ENCODE measurements at regions of chr5 and their contacts with region 1.

Region 1: GRCh38 chr5:149434162-149435014 is 55.3 kb upstream of the IL17B start:
- DNase-seq: peak in 1 of 2 donors; percentile 69
- ATAC-seq: peak; percentile 36

Region 2: GRCh38 chr5:149371296-149371962 is 63.0 kb before region 1 on chr5:
- intact Hi-C with region 1: loop called in 1 of 2 experiments (anchors 10 kb)
- DNase-seq: peak; percentile 57 to 74
- ATAC-seq: peak; percentile 91

Region 3: DNA sequence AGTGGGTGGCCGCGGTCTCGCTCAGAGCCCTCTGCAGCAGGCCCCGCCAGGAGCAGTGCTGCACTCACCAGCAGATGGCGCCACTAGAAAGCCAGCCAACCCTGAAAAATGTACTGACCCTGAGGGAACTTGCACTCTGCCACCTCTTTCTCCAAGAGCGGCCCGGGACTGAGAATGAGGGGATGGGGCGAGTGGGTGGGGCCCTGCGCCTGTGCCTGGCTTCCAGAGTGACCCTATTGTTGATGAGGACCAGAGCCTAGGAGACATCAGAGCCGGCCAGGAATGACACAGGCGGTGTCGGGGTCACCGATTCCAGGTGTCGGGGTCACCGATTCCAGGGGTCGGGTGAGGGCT is 52.4 kb before region 1 on chr5:
- intact Hi-C with region 1: loop called (anchors 10 kb)
- DNase-seq: peak; percentile 72 to 82
- ATAC-seq: peak; percentile 84

Region 4: DNA sequence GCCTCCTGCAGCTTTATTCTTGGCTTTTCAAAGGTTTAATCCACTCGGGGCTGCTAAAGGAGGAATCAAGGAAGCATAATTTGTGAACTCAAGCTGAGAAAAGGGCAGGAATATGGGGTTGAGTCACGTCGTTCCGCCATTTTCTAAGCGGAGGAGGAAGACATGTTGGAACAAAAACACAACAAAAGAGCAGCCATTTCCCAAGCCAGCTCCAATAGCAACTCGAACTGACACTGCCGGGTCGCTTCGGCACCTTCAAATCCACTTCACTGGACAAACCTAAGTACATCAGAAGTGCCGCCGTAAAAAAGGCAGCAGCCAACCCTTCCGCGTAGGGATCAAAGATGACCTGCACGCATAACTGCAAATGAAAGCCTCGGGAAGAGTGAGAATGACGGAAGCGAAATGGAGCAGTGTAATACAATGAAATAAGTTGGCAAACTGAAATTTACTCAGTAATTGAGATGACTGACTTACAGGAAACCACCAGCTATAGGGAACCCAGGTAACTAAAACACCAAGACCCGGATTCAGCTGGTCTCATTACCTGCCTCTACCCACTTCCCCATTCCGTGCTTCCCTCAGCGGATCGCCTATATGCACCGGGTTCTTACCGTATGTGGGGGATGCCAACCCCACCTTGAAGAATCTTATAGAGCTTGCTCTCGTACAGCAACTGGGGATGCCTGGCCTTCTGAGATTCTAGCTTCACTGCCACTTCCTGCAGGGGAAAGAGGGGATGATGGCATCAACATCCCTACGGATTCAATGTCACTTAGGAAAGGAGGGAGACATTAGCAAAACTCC is 115.3 kb after region 1 on chr5:
- intact Hi-C with region 1: no loop called
- DNase-seq: peak; percentile 39 to 45
- ATAC-seq: peak; percentile 8

Region 5: DNA sequence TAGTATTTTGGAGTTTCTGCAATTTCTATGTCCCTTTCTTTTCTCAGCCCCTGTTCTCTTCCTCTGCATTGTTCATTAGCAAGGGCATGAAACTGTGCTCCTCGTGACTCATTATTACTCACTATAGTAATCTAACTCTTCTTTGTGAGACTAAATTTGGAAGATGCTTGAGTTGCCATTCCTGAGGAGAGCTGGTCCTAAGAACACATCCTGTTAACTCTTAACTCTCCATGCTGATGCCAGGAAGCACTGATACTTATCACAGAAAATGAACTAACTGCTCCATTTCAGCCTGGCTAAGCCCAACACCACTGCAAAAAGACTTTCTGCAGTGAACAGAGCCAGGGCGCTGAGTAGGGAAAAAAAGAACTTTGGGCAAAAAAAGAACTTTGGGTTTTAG is 127.5 kb after region 1 on chr5:
- intact Hi-C with region 1: loop called in 1 of 2 experiments (anchors 5 kb)
- DNase-seq: no peak
- ATAC-seq: no peak

Region 6: GRCh38 chr5:149605998-149606724 is 171.8 kb after region 1 on chr5:
- intact Hi-C with region 1: no loop called
- DNase-seq: peak; percentile 63 to 85
- ATAC-seq: peak; percentile 88

Region 7: DNA sequence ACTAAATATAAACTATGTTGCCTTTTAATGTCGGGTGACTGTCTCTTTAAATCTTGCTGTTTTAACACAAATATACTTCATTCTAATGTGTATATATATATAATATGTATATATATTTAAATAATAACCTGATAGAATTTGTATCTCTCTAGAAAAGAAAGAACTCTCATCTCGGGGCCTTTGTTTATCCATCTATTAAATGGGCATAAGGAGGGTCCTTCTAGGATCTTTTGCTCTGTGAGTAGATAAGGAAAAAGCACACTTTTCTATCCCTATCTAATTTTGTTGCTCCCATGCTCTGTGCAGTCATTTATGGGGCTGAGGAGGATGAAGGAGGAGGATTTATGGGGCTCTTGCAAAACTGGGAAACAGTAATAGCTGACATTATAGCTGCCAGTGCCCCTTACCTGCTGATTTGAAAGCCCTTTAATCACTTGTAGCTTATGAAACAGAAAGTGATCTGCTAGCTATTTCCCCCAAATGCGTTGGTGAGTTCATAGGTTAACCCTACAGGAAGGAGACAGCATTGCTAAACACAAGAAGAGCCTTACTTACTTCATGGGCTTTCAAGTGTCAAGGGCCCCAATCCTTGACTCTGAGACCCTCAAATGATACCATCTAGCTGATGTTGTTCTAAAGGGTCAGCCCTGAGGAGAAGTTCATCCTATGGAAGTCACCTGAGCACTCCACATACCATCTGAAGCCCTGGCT is 289.9 kb after region 1 on chr5:
- intact Hi-C with region 1: no loop called
- DNase-seq: no peak
- ATAC-seq: no peak

Measured in left colon (tissue), 2 donors.